Pancreas (tissue), 10 donors: ENCODE measurements at regions of chr9 and their contacts with region 1.

Region 1: GRCh38 chr9:104293877-104294276 is 199.8 kb downstream of the SMC2 start:
- DNase-seq: no peak
- ATAC-seq: no peak
- H3K4me3 ChIP-seq: no peak overlapping the region
- H3K27ac ChIP-seq: no peak overlapping the region
- H3K4me1 ChIP-seq: no peaks in the 10 kb centered on the region
- H3K27me3 ChIP-seq: no peaks in the 10 kb centered on the region
- CTCF ChIP-seq: no peak

Region 2: DNA sequence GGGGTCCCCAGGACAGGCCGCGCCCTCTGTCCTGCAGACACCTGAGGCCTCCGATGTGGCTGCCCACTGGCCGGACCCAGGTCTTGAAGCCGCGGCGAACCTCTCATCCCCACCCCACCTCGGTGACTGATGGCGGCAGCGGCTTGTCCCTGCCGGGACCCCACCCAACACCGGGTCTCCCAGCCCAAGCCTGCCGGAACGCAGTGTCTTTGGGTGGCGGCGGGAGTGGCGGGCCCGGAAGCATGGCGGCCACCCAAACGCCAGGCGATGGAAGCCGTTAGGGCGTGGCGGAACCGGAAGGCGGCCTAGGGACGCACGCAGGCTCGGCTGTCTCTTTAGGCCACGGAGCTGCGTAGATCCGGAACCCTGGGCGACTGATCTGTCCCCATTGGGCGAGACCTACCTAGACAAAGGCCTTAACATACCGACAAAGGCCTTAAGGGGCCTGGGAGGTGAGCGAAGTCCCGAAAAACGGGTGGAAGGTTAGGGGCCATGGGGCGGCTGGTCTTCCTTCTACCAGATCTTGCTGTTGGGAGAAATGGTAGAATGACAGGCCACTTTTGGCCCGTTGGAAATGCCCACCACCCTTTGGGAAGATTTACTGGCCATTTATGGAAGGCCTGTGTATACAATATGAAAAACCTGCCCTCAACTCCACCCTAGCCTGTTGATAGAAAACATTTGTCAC is 294.4 kb before region 1 on chr9:
- intact Hi-C with region 1: no loop called
- DNase-seq: peak in 3 of 6 donors; percentile 12 to 52 (median 50)
- ATAC-seq: no peak
- H3K4me3 ChIP-seq: no peak overlapping the region
- H3K27ac ChIP-seq: no peak overlapping the region
- H3K4me1 ChIP-seq: no peaks in the 10 kb centered on the region
- H3K27me3 ChIP-seq: no peaks in the 10 kb centered on the region
- CTCF ChIP-seq: no peak

Region 3: GRCh38 chr9:104247899-104248460 is 45.9 kb before region 1 on chr9:
- intact Hi-C with region 1: loop called in 1 of 3 experiments (anchors 10 kb)
- DNase-seq: no peak
- ATAC-seq: no peak
- H3K4me3 ChIP-seq: no peak overlapping the region
- H3K27ac ChIP-seq: no peak overlapping the region
- H3K4me1 ChIP-seq: no peaks in the 10 kb centered on the region
- H3K27me3 ChIP-seq: no peaks in the 10 kb centered on the region
- CTCF ChIP-seq: no peak